Breast epithelium (tissue), 4 donors: ENCODE measurements at regions of chr9 and their contacts with region 1.

Region 1: GRCh38 chr9:88702985-88703384 is 168.0 kb downstream of the NXNL2 start:
- DNase-seq: no peak
- H3K4me3 ChIP-seq: no peak overlapping the region
- H3K27ac ChIP-seq: no peak overlapping the region
- H3K4me1 ChIP-seq: no peaks in the 10 kb centered on the region
- H3K27me3 ChIP-seq: no peaks in the 10 kb centered on the region
- CTCF ChIP-seq: no peak
- POLR2A ChIP-seq: no peak

Region 2: GRCh38 chr9:87529671-87530070 is 1173.3 kb before region 1 on chr9:
- intact Hi-C with region 1: loop called (anchors 5 kb)
- DNase-seq: no peak
- H3K4me3 ChIP-seq: no peak overlapping the region
- H3K27ac ChIP-seq: no peak overlapping the region
- H3K4me1 ChIP-seq: no peaks in the 10 kb centered on the region
- H3K27me3 ChIP-seq: no peaks in the 10 kb centered on the region
- CTCF ChIP-seq: no peak
- POLR2A ChIP-seq: no peak